Endothelial cell of umbilical vein (primary cell): ENCODE measurements at regions of chr1 and their contacts with region 1.

Region 1: GRCh38 chr1:202625416-202626360 is 84.6 kb downstream of the SYT2 start:
- DNase-seq: peak; percentile 41
- H3K4me3 ChIP-seq: no peak overlapping the region
- H3K27ac ChIP-seq: no peak overlapping the region
- H3K4me1 ChIP-seq: no peaks in the 10 kb centered on the region
- H3K27me3 ChIP-seq: no peaks in the 10 kb centered on the region
- CTCF ChIP-seq: peak; percentile 46 to 91
- POLR2A ChIP-seq: no peak

Region 2: GRCh38 chr1:201488817-201489589 is 1136.7 kb before region 1 on chr1:
- CTCF ChIA-PET with region 1: no interaction called
- POLR2A ChIA-PET with region 1: no interaction called
- dilution Hi-C with region 1: no loop called
- intact Hi-C with region 1: no loop called
- DNase-seq: peak; percentile 96
- H3K4me3 ChIP-seq: no peak overlapping the region
- H3K27ac ChIP-seq: peak overlapping the region; percentile 90
- H3K4me1 ChIP-seq: peaks cover 75% of the 10 kb centered on the region
- H3K27me3 ChIP-seq: no peaks in the 10 kb centered on the region
- CTCF ChIP-seq: no peak
- POLR2A ChIP-seq: peak; percentile 28

Region 3: GRCh38 chr1:202501281-202501680 is 124.4 kb before region 1 on chr1:
- CTCF ChIA-PET with region 1: interaction called, 23 read pairs
- POLR2A ChIA-PET with region 1: no interaction called
- dilution Hi-C with region 1: no loop called
- intact Hi-C with region 1: loop called (anchors 1 kb)
- DNase-seq: peak; percentile 32
- H3K4me3 ChIP-seq: no peak overlapping the region
- H3K27ac ChIP-seq: no peak overlapping the region
- H3K4me1 ChIP-seq: no peaks in the 10 kb centered on the region
- H3K27me3 ChIP-seq: no peaks in the 10 kb centered on the region
- CTCF ChIP-seq: peak in 1 of 2 donors; percentile 12
- POLR2A ChIP-seq: no peak